ENCODE measurements at regions of chr10 and their contacts with region 1.

Region 1: GRCh38 chr10:48289501-48290238 is 15.2 kb upstream of the FRMPD2 start:
- DNase-seq: peak; percentile 66 to 81
- H3K4me3 ChIP-seq: no peak overlapping the region
- H3K4me3 Mint-ChIP-seq: no peak overlapping the region
- H3K27ac Mint-ChIP-seq: no peak overlapping the region
- H3K4me1 ChIP-seq: no peaks in the 10 kb centered on the region
- H3K4me1 Mint-ChIP-seq: peaks cover 9% of the 10 kb centered on the region
- H3K27me3 ChIP-seq: no peaks in the 10 kb centered on the region; the same call in 1 of the 2 replicates
- H3K27me3 Mint-ChIP-seq: peaks cover 11% of the 10 kb centered on the region
- CTCF ChIP-seq: peak; percentile 96

Region 2: GRCh38 chr10:48199580-48200377 is 89.9 kb before region 1 on chr10:
- CTCF ChIA-PET with region 1: no interaction called
- POLR2A ChIA-PET with region 1: no interaction called
- intact Hi-C with region 1: loop called (anchors 5 kb)
- DNase-seq: no peak
- H3K4me3 ChIP-seq: no peak overlapping the region
- H3K4me3 Mint-ChIP-seq: no peak overlapping the region
- H3K27ac Mint-ChIP-seq: no peak overlapping the region
- H3K4me1 ChIP-seq: peaks cover 7% of the 10 kb centered on the region
- H3K4me1 Mint-ChIP-seq: peaks cover under 1% of the 10 kb centered on the region
- H3K27me3 ChIP-seq: no peaks in the 10 kb centered on the region
- H3K27me3 Mint-ChIP-seq: peaks cover 3% of the 10 kb centered on the region
- CTCF ChIP-seq: no peak

Region 3: DNA sequence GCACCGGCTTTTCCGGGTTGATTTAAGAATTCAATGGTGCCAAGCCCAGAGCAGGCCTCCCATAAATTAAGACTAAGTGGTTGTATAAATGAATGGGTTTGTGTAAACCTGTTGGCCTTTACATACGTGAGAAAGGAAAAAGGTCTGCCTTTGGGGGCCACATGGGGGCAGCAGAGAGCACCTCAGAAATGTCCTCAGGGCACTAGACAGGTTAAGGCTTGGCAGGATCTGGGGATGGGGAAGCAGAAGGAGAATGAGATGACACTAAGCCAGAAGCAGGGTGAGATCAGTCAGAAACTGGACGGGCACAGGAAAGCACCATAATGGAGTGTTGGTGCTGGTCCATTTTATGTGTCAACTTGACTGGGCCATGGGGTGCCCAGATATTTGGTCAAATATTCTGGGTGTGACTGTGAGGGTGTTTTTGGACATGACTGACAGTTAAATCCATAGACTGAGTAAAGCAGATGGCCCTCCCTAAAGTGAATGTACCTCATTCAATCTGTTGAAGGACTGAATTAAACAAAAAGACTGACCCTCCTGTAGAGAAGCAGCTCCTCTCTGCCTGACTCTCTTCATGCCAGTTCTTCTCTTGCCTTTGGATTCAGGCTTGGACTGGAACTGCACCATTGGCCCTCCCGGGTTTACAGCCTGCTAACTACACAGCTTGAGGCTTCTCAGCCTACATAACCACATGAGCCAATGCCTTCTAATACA is 74.0 kb before region 1 on chr10:
- CTCF ChIA-PET with region 1: interaction called, 12 read pairs
- POLR2A ChIA-PET with region 1: no interaction called
- intact Hi-C with region 1: loop called (anchors 1 kb)
- DNase-seq: peak; percentile 70 to 82
- H3K4me3 ChIP-seq: no peak overlapping the region
- H3K4me3 Mint-ChIP-seq: no peak overlapping the region
- H3K27ac Mint-ChIP-seq: no peak overlapping the region
- H3K4me1 ChIP-seq: no peaks in the 10 kb centered on the region
- H3K4me1 Mint-ChIP-seq: no peaks in the 10 kb centered on the region
- H3K27me3 ChIP-seq: no peaks in the 10 kb centered on the region
- H3K27me3 Mint-ChIP-seq: peaks cover 30% of the 10 kb centered on the region
- CTCF ChIP-seq: peak; percentile 94 to 95

Region 4: DNA sequence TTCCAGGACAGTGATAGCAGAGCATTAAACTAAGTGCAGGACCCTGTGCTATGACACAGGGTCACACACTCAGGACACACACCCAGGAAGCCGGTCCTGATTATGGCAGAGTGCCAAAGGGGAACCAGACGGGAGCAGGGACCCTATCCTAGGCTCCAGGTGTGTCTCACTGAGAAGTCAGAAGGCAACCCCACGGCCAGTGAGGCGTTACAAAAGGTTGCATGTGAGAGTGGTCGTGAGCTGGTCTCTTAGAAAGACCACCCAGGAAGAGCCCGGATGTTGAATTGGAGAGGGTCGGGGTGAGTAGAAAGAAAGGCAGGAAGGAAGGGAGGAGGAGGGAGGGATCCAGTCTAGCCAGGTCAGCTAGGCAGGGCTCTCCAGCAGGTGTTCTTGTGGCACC is 46.2 kb before region 1 on chr10:
- CTCF ChIA-PET with region 1: no interaction called
- POLR2A ChIA-PET with region 1: no interaction called
- intact Hi-C with region 1: no loop called
- DNase-seq: peak in 1 of 2 experiments; percentile 29
- H3K4me3 ChIP-seq: no peak overlapping the region
- H3K4me3 Mint-ChIP-seq: no peak overlapping the region
- H3K27ac Mint-ChIP-seq: no peak overlapping the region
- H3K4me1 ChIP-seq: no peaks in the 10 kb centered on the region
- H3K4me1 Mint-ChIP-seq: no peaks in the 10 kb centered on the region
- H3K27me3 ChIP-seq: no peaks in the 10 kb centered on the region
- H3K27me3 Mint-ChIP-seq: peaks cover 27% of the 10 kb centered on the region
- CTCF ChIP-seq: no peak

Region 5: DNA sequence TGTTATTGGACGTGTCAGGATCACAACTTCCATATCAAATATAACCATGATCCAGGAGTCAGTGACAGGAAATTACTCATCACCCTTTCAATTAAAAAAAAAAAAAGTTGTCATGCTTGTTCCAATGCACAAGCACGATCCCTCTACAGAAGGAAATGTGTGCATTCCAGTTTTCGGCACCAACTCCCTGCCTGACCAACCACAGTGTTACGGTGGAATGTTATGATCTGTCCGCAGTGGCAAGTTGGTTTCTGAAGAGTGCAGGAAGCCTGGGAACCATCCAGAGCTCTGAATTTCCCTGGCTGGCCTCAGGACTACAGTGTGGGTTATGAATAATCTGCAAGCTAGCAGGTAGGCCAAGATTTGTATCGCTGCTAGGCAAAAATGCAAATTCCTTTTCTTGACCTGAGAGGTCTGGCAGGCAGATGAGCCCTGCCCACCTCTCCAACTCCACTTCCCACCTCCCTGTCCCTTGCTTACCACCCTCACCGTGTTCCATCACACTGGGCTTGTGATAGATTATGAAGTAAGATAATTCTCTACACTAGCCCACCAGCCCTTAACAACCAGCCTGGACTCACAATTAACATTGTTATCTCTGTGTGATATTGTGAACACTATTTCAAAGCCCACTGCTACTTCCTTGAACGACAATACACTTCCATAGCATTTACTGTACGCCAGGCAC is 35.6 kb before region 1 on chr10:
- CTCF ChIA-PET with region 1: no interaction called
- POLR2A ChIA-PET with region 1: no interaction called
- intact Hi-C with region 1: no loop called
- DNase-seq: no peak
- H3K4me3 ChIP-seq: no peak overlapping the region
- H3K4me3 Mint-ChIP-seq: no peak overlapping the region
- H3K27ac Mint-ChIP-seq: no peak overlapping the region
- H3K4me1 ChIP-seq: peaks cover 6% of the 10 kb centered on the region; the same call in 1 of the 2 replicates
- H3K4me1 Mint-ChIP-seq: no peaks in the 10 kb centered on the region
- H3K27me3 ChIP-seq: no peaks in the 10 kb centered on the region
- H3K27me3 Mint-ChIP-seq: no peaks in the 10 kb centered on the region
- CTCF ChIP-seq: no peak